ENCODE measurements at regions of chr11 and their contacts with region 1.

Region 1: GRCh38 chr11:65506770-65507505 is 8.1 kb downstream of the MALAT1 start:
- DNase-seq: peak; percentile 69
- H3K4me3 Mint-ChIP-seq: no peak overlapping the region
- H3K27ac Mint-ChIP-seq: no peak overlapping the region
- H3K4me1 Mint-ChIP-seq: peaks cover 44% of the 10 kb centered on the region
- H3K27me3 Mint-ChIP-seq: peaks cover 4% of the 10 kb centered on the region

Region 2: GRCh38 chr11:65366340-65366773 is 140.6 kb before region 1 on chr11:
- CTCF ChIA-PET with region 1: interaction called, 32 read pairs
- POLR2A ChIA-PET with region 1: no interaction called
- intact Hi-C with region 1: loop called (anchors 1 kb)
- DNase-seq: peak; percentile 30
- H3K4me3 Mint-ChIP-seq: no peak overlapping the region
- H3K27ac Mint-ChIP-seq: no peak overlapping the region
- H3K4me1 Mint-ChIP-seq: peaks cover 4% of the 10 kb centered on the region
- H3K27me3 Mint-ChIP-seq: no peaks in the 10 kb centered on the region

Region 3: GRCh38 chr11:65425105-65425970 is 81.6 kb before region 1 on chr11:
- CTCF ChIA-PET with region 1: interaction called, 257 read pairs
- POLR2A ChIA-PET with region 1: interaction called, 4,089 read pairs
- intact Hi-C with region 1: loop called (anchors 2 kb)
- DNase-seq: peak; percentile 91
- H3K4me3 Mint-ChIP-seq: peak overlapping the region; percentile 97
- H3K27ac Mint-ChIP-seq: peak overlapping the region; percentile 100
- H3K4me1 Mint-ChIP-seq: peaks cover 56% of the 10 kb centered on the region
- H3K27me3 Mint-ChIP-seq: peaks cover 24% of the 10 kb centered on the region

Region 4: GRCh38 chr11:65471410-65471762 is 35.6 kb before region 1 on chr11:
- CTCF ChIA-PET with region 1: interaction called, 10 read pairs
- POLR2A ChIA-PET with region 1: interaction called, 824 read pairs
- intact Hi-C with region 1: loop called (anchors 1 kb)
- DNase-seq: no peak
- H3K4me3 Mint-ChIP-seq: peak overlapping the region; percentile 67
- H3K27ac Mint-ChIP-seq: peak overlapping the region; percentile 99
- H3K4me1 Mint-ChIP-seq: peaks cover 29% of the 10 kb centered on the region
- H3K27me3 Mint-ChIP-seq: no peaks in the 10 kb centered on the region